MCF 10A (cell line): ENCODE measurements at regions of chr22 and their contacts with region 1.

Region 1: GRCh38 chr22:33920927-33921524 is 750 bp upstream of the LARGE1 start:
- DNase-seq: peak; percentile 89
- H3K4me3 Mint-ChIP-seq: peak overlapping the region; percentile 88
- H3K27ac Mint-ChIP-seq: peak overlapping the region; percentile 28
- H3K4me1 Mint-ChIP-seq: peaks cover 25% of the 10 kb centered on the region
- H3K27me3 Mint-ChIP-seq: no peaks in the 10 kb centered on the region
- CTCF ChIP-seq: no peak

Region 2: GRCh38 chr22:33302049-33302545 is 618.9 kb before region 1 on chr22:
- CTCF ChIA-PET with region 1: interaction called, 6 read pairs
- POLR2A ChIA-PET with region 1: interaction called, 3 read pairs
- intact Hi-C with region 1: loop called (anchors 2 kb)
- DNase-seq: peak; percentile 35
- H3K4me3 Mint-ChIP-seq: no peak overlapping the region
- H3K27ac Mint-ChIP-seq: peak overlapping the region; percentile 17
- H3K4me1 Mint-ChIP-seq: no peaks in the 10 kb centered on the region
- H3K27me3 Mint-ChIP-seq: no peaks in the 10 kb centered on the region
- CTCF ChIP-seq: peak; percentile 97

Region 3: GRCh38 chr22:33467620-33468095 is 453.4 kb before region 1 on chr22:
- CTCF ChIA-PET with region 1: no interaction called
- POLR2A ChIA-PET with region 1: no interaction called
- intact Hi-C with region 1: no loop called
- DNase-seq: no peak
- H3K4me3 Mint-ChIP-seq: no peak overlapping the region
- H3K27ac Mint-ChIP-seq: no peak overlapping the region
- H3K4me1 Mint-ChIP-seq: no peaks in the 10 kb centered on the region
- H3K27me3 Mint-ChIP-seq: no peaks in the 10 kb centered on the region
- CTCF ChIP-seq: peak; percentile 7

Region 4: GRCh38 chr22:33726294-33726734 is 194.7 kb before region 1 on chr22:
- CTCF ChIA-PET with region 1: interaction called, 3 read pairs
- POLR2A ChIA-PET with region 1: interaction called, 3 read pairs
- intact Hi-C with region 1: loop called (anchors 5 kb)
- DNase-seq: no peak
- H3K4me3 Mint-ChIP-seq: no peak overlapping the region
- H3K27ac Mint-ChIP-seq: peak overlapping the region; percentile 17
- H3K4me1 Mint-ChIP-seq: peaks cover 21% of the 10 kb centered on the region
- H3K27me3 Mint-ChIP-seq: no peaks in the 10 kb centered on the region
- CTCF ChIP-seq: no peak

Region 5: GRCh38 chr22:33873186-33873585 is 47.8 kb before region 1 on chr22:
- CTCF ChIA-PET with region 1: no interaction called
- POLR2A ChIA-PET with region 1: no interaction called
- intact Hi-C with region 1: no loop called
- DNase-seq: no peak
- H3K4me3 Mint-ChIP-seq: no peak overlapping the region
- H3K27ac Mint-ChIP-seq: no peak overlapping the region
- H3K4me1 Mint-ChIP-seq: no peaks in the 10 kb centered on the region
- H3K27me3 Mint-ChIP-seq: no peaks in the 10 kb centered on the region
- CTCF ChIP-seq: no peak

Region 6: DNA sequence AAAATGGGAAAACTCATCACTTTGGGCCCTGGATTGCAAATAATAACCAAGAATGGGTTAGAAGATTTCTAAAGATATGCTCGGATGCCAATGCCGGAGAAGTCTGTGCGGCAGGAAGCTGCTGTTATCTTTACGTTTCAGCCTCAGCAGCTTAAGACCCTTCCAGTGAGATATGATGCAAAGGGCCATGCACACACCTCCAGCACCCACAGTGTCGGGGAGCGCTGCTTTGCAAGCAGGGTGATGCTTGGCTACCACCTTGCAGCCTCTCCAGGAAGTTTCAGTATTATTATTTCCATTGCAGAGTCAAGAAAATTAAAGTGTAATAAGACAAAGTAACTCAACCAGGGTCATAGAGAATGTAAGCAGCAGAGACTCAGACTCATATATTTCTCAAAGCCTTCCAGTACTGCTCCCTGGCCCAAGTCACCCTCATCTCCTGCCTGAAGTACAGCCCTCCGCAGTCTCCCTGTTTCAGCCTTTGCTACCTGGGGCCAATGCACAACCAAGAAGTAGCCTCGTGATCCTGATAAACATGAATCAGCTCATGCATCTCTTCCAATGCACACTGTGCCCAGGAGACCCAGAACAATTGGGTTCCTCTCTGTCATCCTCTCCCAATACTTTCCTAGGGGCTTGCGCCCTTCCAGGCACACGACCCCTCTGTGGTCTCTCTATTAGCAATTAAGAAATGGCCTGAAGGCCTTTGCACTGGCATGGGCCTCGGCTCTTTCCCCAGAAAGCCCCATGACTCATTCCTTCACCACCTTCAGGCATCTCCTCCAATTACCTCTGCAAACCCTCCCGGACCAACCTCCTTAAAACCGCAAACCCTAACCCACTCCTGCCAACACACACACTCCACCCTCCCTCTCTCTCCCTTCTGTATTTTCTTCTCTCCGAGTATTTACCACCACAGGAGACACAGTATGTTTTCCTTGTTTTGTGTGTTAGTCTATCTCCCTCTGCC is 37.8 kb before region 1 on chr22:
- CTCF ChIA-PET with region 1: interaction called, 3 read pairs
- POLR2A ChIA-PET with region 1: no interaction called
- intact Hi-C with region 1: loop called (anchors 1 kb)
- DNase-seq: peak; percentile 45
- H3K4me3 Mint-ChIP-seq: no peak overlapping the region
- H3K27ac Mint-ChIP-seq: peak overlapping the region; percentile 2
- H3K4me1 Mint-ChIP-seq: peaks cover 18% of the 10 kb centered on the region
- H3K27me3 Mint-ChIP-seq: no peaks in the 10 kb centered on the region
- CTCF ChIP-seq: no peak

Region 7: GRCh38 chr22:34105461-34106062 is 184.5 kb after region 1 on chr22:
- CTCF ChIA-PET with region 1: interaction called, 26 read pairs
- POLR2A ChIA-PET with region 1: no interaction called
- intact Hi-C with region 1: no loop called
- DNase-seq: peak; percentile 0
- H3K4me3 Mint-ChIP-seq: no peak overlapping the region
- H3K27ac Mint-ChIP-seq: no peak overlapping the region
- H3K4me1 Mint-ChIP-seq: no peaks in the 10 kb centered on the region
- H3K27me3 Mint-ChIP-seq: no peaks in the 10 kb centered on the region
- CTCF ChIP-seq: no peak

Region 8: GRCh38 chr22:35231585-35232084 is 1310.6 kb after region 1 on chr22:
- CTCF ChIA-PET with region 1: interaction called, 16 read pairs
- POLR2A ChIA-PET with region 1: interaction called, 5 read pairs
- intact Hi-C with region 1: loop called (anchors 1 kb)
- DNase-seq: peak; percentile 84
- H3K4me3 Mint-ChIP-seq: no peak overlapping the region
- H3K27ac Mint-ChIP-seq: no peak overlapping the region
- H3K4me1 Mint-ChIP-seq: no peaks in the 10 kb centered on the region
- H3K27me3 Mint-ChIP-seq: peaks cover 56% of the 10 kb centered on the region
- CTCF ChIP-seq: peak; percentile 90